PC-9 (cell line): ENCODE measurements at regions of chr9 and their contacts with region 1.

Region 1: GRCh38 chr9:116737152-116737546 is 50.0 kb downstream of the TRIM32 start:
- DNase-seq: peak; percentile 42 to 82
- H3K4me3 ChIP-seq: no peak overlapping the region
- H3K27ac ChIP-seq: no peak overlapping the region
- H3K4me1 ChIP-seq: no peaks in the 10 kb centered on the region
- H3K27me3 ChIP-seq: no peaks in the 10 kb centered on the region
- CTCF ChIP-seq: peak; percentile 96

Region 2: GRCh38 chr9:116849721-116850120 is 112.6 kb after region 1 on chr9:
- CTCF ChIA-PET with region 1: no interaction called
- POLR2A ChIA-PET with region 1: no interaction called
- intact Hi-C with region 1: no loop called
- DNase-seq: no peak
- H3K4me3 ChIP-seq: no peak overlapping the region
- H3K27ac ChIP-seq: no peak overlapping the region
- H3K4me1 ChIP-seq: no peaks in the 10 kb centered on the region
- H3K27me3 ChIP-seq: no peaks in the 10 kb centered on the region
- CTCF ChIP-seq: no peak

Region 3: GRCh38 chr9:116860509-116861120 is 123.5 kb after region 1 on chr9:
- CTCF ChIA-PET with region 1: interaction called, 5 read pairs
- POLR2A ChIA-PET with region 1: no interaction called
- intact Hi-C with region 1: loop called (anchors 1 kb)
- DNase-seq: peak; percentile 56 to 66
- H3K4me3 ChIP-seq: no peak overlapping the region
- H3K27ac ChIP-seq: no peak overlapping the region
- H3K4me1 ChIP-seq: peaks cover 24% of the 10 kb centered on the region
- H3K27me3 ChIP-seq: no peaks in the 10 kb centered on the region
- CTCF ChIP-seq: peak; percentile 84

Region 4: GRCh38 chr9:116987721-116988485 is 250.8 kb after region 1 on chr9:
- CTCF ChIA-PET with region 1: no interaction called
- POLR2A ChIA-PET with region 1: no interaction called
- intact Hi-C with region 1: no loop called
- DNase-seq: no peak
- H3K4me3 ChIP-seq: no peak overlapping the region
- H3K27ac ChIP-seq: peak overlapping the region; percentile 44
- H3K4me1 ChIP-seq: peaks cover 23% of the 10 kb centered on the region
- H3K27me3 ChIP-seq: no peaks in the 10 kb centered on the region
- CTCF ChIP-seq: no peak

Region 5: GRCh38 chr9:117555964-117556629 is 818.9 kb after region 1 on chr9:
- CTCF ChIA-PET with region 1: no interaction called
- POLR2A ChIA-PET with region 1: no interaction called
- intact Hi-C with region 1: loop called (anchors 2 kb)
- DNase-seq: peak in 1 of 2 experiments; percentile 28
- H3K4me3 ChIP-seq: no peak overlapping the region
- H3K27ac ChIP-seq: no peak overlapping the region
- H3K4me1 ChIP-seq: no peaks in the 10 kb centered on the region
- H3K27me3 ChIP-seq: no peaks in the 10 kb centered on the region
- CTCF ChIP-seq: peak; percentile 63